ENCODE measurements at regions of chr19 and their contacts with region 1.

Region 1: GRCh38 chr19:35545001-35545911 is at the start of gene TMEM147:
- DNase-seq: peak; percentile 92 to 96
- H3K4me3 ChIP-seq: peak within 1 kb of the TSS; percentile 79
- H3K27ac ChIP-seq: peak within 1 kb of the TSS; percentile 87 to 89
- H3K4me1 ChIP-seq: peaks cover 7 to 32% (median 20%) of the 10 kb centered on the region in 4 donors
- H3K27me3 ChIP-seq: no peaks in the 10 kb centered on the region
- CTCF ChIP-seq: no peak

Region 2: DNA sequence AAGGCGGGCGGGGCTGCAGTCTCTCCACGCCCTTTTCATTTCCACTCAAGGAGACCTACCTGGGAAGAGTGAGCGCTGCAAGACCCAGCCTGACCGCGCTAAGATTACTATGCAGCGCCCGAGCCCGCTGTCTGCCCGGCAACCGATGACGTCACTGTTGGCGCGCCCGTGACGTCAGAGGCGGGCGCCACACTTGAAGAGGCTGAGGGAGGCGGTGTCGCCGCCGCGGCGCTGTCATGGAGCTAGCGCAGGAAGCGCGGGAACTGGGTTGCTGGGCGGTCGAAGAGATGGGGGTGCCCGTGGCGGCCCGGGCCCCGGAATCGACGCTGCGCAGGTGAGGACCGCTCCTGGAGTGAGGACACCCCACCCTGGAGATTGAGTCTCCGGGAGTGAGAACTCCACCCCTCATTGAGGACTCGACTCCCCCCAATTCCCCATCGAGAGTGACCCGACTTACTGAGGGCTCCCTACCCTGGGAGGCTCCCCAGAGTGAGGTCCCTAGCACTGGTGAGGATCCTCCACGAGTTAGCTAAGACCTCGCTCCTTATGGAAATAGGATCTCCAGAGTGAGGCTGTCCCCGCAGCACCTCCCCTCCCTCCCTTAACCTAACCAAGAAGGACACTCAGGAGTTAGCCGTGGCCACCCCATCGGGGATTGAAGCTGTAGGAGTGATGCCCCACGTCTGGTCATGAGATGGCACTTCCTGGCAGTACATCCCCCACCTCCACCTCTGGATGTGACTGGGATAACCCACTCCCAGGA is 67.5 kb after region 1 on chr19 and contains the start of gene HAUS5:
- intact Hi-C with region 1: loop called (anchors 5 kb)
- DNase-seq: peak; percentile 95
- H3K4me3 ChIP-seq: peak within 1 kb of the TSS; percentile 68 to 93
- H3K27ac ChIP-seq: peak within 1 kb of the TSS; percentile 76
- H3K4me1 ChIP-seq: peaks cover 0 to 16% (median 11%) of the 10 kb centered on the region in 4 donors
- H3K27me3 ChIP-seq: no peaks in the 10 kb centered on the region
- CTCF ChIP-seq: peak in 1 of 2 experiments; percentile 25

Region 3: GRCh38 chr19:35790981-35791813 is 245.9 kb after region 1 on chr19:
- intact Hi-C with region 1: no loop called
- DNase-seq: no peak
- H3K4me3 ChIP-seq: no peak overlapping the region
- H3K27ac ChIP-seq: no peak overlapping the region
- H3K4me1 ChIP-seq: no peaks in the 10 kb centered on the region
- H3K27me3 ChIP-seq: peaks cover 0 to 3% of the 10 kb centered on the region in 2 donors
- CTCF ChIP-seq: no peak